ENCODE measurements at regions of chr3 and their contacts with region 1.

Region 1: DNA sequence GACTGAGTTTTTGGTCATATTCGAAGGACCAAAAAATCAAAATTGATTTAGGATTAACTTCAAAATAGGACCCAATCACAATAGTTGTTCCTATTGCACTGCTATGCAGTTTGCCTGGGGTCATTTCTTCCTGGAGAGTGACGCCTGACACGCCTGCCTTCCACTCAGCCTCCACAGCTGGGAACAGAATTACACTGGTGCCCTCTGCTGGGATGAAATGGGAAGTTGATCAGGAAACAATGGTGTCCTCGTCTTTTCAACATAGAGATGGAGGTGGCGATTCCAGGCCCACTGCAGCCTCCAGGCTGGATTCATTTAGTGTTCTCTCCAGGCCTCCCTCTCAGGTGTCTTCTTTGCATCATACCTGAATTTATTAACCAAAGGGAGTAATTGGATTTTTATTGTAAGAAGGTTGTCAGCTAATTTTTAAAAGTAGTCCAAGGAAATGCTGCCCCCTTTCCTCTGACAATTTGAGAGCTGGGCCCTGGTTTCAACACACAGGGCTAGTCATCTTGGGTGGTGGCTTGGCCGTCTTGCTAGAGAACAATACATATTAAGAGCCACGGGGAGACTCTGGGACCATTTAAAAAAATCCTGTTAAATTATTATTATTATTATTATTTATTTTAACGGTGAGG is 69.7 kb downstream of the GAP43 start:
- DNase-seq: peak; percentile 66 to 75 (median 71)
- ATAC-seq: peak; percentile 80 to 98 (median 96)
- H3K4me3 ChIP-seq: no peak overlapping the region
- H3K27ac ChIP-seq: peak overlapping the region in 1 of 12 donors; percentile 61
- H3K4me1 ChIP-seq: peaks cover 0 to 14% (median 0%) of the 10 kb centered on the region in 12 donors
- H3K27me3 ChIP-seq: no peaks in the 10 kb centered on the region
- CTCF ChIP-seq: peak; percentile 69 to 92 (median 83)
- POLR2A ChIP-seq: no peak

Region 2: DNA sequence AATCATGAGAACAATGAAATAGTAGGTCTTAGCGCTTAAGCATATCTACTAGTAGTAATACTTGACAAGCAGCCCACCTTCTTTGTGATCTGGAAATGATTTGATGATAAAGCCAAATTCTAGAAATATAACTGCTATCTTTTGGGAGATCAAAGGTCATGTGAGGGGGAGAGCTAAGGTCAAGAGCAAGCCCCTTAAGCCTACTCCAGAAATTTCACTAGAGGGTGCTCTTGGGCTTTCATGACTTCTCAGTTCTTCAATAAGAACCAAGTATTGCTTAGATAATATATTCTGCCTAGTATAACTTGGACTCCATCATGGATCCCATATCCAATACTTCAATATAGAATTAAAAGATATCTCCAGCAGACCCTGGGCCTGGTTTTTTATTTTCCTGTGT is 865.5 kb before region 1 on chr3:
- intact Hi-C with region 1: loop called in 1 of 10 experiments (anchors 10 kb)
- DNase-seq: no peak
- ATAC-seq: peak in 3 of 4 donors; percentile 66 to 68 (median 67)
- H3K4me3 ChIP-seq: no peak overlapping the region
- H3K27ac ChIP-seq: no peak overlapping the region
- H3K4me1 ChIP-seq: peaks cover 0 to 6% (median 0%) of the 10 kb centered on the region in 12 donors
- H3K27me3 ChIP-seq: no peaks in the 10 kb centered on the region
- CTCF ChIP-seq: peak; percentile 49 to 80 (median 66)
- POLR2A ChIP-seq: no peak

Region 3: GRCh38 chr3:115040673-115041286 is 652.2 kb before region 1 on chr3:
- intact Hi-C with region 1: loop called in 1 of 10 experiments (anchors 5 kb)
- DNase-seq: peak in 2 of 5 donors; percentile 8 to 26
- ATAC-seq: peak in 1 of 4 donors; percentile 41
- H3K4me3 ChIP-seq: no peak overlapping the region
- H3K27ac ChIP-seq: no peak overlapping the region
- H3K4me1 ChIP-seq: peaks cover 0 to 23% (median 4%) of the 10 kb centered on the region in 12 donors
- H3K27me3 ChIP-seq: no peaks in the 10 kb centered on the region
- CTCF ChIP-seq: peak; percentile 41 to 72 (median 61)
- POLR2A ChIP-seq: no peak

Region 4: GRCh38 chr3:115217678-115218451 is 475.1 kb before region 1 on chr3:
- intact Hi-C with region 1: loop called (anchors 1 to 2 kb)
- DNase-seq: peak in 3 of 5 donors; percentile 23 to 36 (median 28)
- ATAC-seq: peak; percentile 65 to 85 (median 74)
- H3K4me3 ChIP-seq: no peak overlapping the region
- H3K27ac ChIP-seq: no peak overlapping the region
- H3K4me1 ChIP-seq: peaks cover 0 to 22% (median 8%) of the 10 kb centered on the region in 12 donors
- H3K27me3 ChIP-seq: no peaks in the 10 kb centered on the region
- CTCF ChIP-seq: peak; percentile 47 to 83 (median 71)
- POLR2A ChIP-seq: no peak

Region 5: DNA sequence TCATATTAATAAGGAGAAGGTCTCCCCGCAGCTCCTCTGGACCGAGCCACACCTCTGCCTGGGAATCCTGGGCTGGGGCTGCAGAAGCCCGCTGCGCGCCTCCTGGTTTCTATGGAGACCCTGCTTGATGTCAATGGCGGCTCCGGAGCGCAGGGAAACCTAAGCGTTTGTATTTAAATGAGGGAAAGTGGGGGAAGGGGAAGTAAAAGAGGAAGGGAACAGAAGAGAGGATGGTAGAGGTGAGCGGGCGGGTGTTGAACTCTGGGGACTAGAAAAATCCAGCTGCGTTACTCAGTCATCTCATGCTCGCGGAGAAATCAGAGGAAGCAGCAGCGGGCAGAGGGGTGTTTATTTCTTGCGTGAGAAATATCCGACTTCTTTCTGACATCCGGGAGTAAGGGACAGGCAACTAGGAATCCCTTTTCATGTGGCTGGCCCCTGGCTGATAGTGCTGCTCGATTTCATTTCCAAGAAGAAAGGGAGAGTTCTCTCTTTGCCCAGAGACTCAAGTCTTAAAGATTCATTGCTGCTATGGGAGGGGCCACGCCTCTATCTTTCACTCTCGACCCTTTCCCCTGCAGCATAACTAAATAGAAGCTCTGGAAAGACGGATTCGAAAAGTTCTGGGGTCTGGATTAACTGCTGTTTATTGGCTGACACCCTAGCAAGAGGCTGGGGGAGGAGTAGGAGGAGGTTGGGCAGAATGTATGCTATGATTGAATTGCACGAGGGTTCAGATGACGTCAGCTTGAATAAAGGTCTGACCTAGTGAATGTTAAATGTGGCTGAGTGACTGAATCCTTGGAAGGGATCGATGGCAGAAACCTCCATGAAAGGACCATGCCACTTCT is 180.2 kb before region 1 on chr3:
- intact Hi-C with region 1: loop called in 1 of 10 experiments (anchors 10 kb)
- DNase-seq: peak in 4 of 5 donors; percentile 14 to 61 (median 34)
- ATAC-seq: peak; percentile 27 to 70 (median 66)
- H3K4me3 ChIP-seq: peak overlapping the region; percentile 18 to 67 (median 52)
- H3K27ac ChIP-seq: peak overlapping the region in 9 of 12 donors; percentile 13 to 65 (median 41)
- H3K4me1 ChIP-seq: peaks cover 0 to 22% (median 10%) of the 10 kb centered on the region in 12 donors
- H3K27me3 ChIP-seq: peaks cover 0 to 3% (median 0%) of the 10 kb centered on the region in 9 donors
- CTCF ChIP-seq: no peak
- POLR2A ChIP-seq: no peak

Region 6: DNA sequence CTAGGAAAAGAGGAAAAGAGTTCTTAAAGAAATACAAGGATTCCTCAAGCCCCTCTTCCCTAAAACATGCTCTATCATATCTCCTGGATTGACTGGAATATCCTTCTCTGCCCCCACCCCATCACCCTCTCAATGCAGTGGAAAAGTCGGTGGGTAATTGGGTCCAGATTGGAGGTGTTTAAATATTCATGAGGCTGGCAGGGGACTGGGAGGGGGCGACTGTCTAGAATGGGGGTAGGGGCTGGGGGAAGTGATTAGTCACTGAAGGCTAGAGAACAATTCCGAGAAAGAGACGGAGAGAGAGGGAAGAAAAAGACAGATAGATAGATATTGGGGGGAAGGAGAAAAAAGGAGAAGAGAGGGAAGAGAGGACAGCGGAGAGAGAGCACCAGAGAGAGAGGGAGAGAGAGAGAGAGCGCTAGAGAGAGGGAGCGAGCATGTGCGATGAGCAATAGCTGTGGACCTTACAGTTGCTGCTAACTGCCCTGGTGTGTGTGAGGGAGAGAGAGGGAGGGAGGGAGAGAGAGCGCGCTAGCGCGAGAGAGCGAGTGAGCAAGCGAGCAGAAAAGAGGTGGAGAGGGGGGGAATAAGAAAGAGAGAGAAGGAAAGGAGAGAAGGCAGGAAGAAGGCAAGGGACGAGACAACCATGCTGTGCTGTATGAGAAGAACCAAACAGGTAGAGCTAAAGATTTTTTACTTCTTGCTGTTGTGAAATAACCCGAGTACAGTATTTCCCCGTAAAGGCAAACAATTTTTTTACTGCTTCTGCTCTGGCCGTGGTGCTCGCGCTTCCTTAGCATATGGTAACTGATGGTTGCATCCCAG is 69.8 kb before region 1 on chr3 and contains the start of gene GAP43:
- intact Hi-C with region 1: no loop called
- DNase-seq: peak in 4 of 5 donors; percentile 32 to 63 (median 40)
- ATAC-seq: peak; percentile 77 to 98 (median 92)
- H3K4me3 ChIP-seq: peak within 1 kb of the TSS in 11 of 12 donors; percentile 22 to 58 (median 39)
- H3K27ac ChIP-seq: no peak within 1 kb of the TSS
- H3K4me1 ChIP-seq: peaks cover 0 to 11% (median 8%) of the 10 kb centered on the region in 12 donors
- H3K27me3 ChIP-seq: peaks cover 0 to 25% (median 9%) of the 10 kb centered on the region in 9 donors
- CTCF ChIP-seq: no peak
- POLR2A ChIP-seq: no peak
- total RNA-seq, gene GAP43: 0.56 to 4.7 (median 1.2) TPM in 8 of 9 donors, not detected in the other

Region 7: GRCh38 chr3:115658337-115659181 is 34.4 kb before region 1 on chr3:
- intact Hi-C with region 1: loop called in 1 of 10 experiments (anchors 2 kb)
- DNase-seq: peak; percentile 86 to 91 (median 89)
- ATAC-seq: peak; percentile 85 to 98 (median 96)
- H3K4me3 ChIP-seq: peak overlapping the region; percentile 49 to 93 (median 82)
- H3K27ac ChIP-seq: peak overlapping the region; percentile 90 to 100 (median 98)
- H3K4me1 ChIP-seq: peaks cover 0 to 33% (median 21%) of the 10 kb centered on the region in 12 donors
- H3K27me3 ChIP-seq: no peaks in the 10 kb centered on the region
- CTCF ChIP-seq: peak in 1 of 12 donors; percentile 18
- POLR2A ChIP-seq: peak in 1 of 2 donors; percentile 49

Region 8: GRCh38 chr3:115783938-115784738 is 91.1 kb after region 1 on chr3:
- intact Hi-C with region 1: loop called in 7 of 10 experiments (anchors 1 to 10 kb)
- DNase-seq: peak; percentile 92 to 95 (median 93)
- ATAC-seq: peak; percentile 95 to 97 (median 96)
- H3K4me3 ChIP-seq: peak overlapping the region; percentile 63 to 92 (median 76)
- H3K27ac ChIP-seq: peak overlapping the region; percentile 89 to 99 (median 96)
- H3K4me1 ChIP-seq: peaks cover 0 to 19% (median 13%) of the 10 kb centered on the region in 12 donors
- H3K27me3 ChIP-seq: no peaks in the 10 kb centered on the region
- CTCF ChIP-seq: peak; percentile 92 to 99 (median 98)
- POLR2A ChIP-seq: no peak

Region 9: DNA sequence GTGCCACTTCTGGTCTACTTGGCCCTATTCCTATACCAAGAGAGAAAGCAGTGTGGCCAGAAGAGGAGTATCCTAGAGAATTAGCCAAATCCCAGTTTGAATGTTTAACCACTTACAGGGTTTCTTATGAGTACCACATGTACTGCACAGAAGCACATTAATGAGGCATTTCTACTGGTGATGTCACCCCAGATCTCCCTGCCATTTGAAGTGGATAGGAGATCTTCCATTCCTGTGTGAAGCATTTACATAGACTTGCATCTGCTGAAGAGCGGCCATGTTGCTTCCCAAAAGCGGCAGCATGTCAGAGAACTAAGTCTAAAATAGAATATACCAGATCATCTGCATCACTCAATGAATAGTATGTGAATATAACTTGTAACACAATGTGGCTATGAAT is 908.2 kb after region 1 on chr3:
- intact Hi-C with region 1: no loop called
- DNase-seq: no peak
- ATAC-seq: no peak
- H3K4me3 ChIP-seq: no peak overlapping the region
- H3K27ac ChIP-seq: no peak overlapping the region
- H3K4me1 ChIP-seq: no peaks in the 10 kb centered on the region
- H3K27me3 ChIP-seq: peaks cover 0 to 3% (median 0%) of the 10 kb centered on the region in 9 donors
- CTCF ChIP-seq: no peak
- POLR2A ChIP-seq: no peak

Measured in heart left ventricle (tissue), 16 donors.